ENCODE measurements at regions of chr22 and their contacts with region 1.

Region 1: DNA sequence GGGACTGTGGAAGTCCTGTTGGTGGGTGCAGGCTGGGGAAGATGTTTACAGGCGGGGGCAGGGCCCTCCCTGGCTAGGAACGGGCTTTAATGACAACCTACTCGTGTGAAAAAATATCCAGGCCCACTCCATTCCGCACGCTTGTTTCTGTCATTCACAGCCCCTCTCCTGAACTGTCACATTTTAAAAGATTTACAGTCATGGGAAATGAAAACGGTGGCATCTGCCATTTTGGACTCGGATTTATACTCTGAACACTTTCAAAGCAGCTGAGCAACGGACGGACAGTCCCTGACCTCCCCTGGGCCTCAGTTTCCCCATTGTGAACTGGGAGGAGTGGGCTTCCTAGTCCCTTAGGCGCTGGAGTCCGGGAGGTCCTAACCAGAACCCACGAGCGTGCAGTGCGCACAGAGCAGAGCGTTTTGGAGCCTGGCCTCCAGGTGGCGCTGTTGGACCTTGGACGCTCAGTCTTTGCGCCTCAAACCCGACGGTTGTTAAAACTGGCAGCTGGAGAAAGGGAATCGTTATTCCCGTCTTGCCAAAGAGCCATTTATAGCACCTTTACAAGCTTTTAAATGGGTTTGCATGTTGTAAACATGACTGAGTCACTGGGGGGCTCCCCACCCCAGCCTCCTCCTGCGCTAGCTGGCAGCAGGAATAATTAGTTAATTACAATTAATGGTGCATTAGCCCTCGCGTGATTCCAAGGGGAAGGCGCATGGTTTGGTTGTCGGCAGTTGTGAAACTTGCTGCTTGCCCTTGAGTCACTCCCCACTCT is 75.3 kb downstream of the FBLN1 start:
- DNase-seq: peak; percentile 73 to 91 (median 86)
- H3K4me3 ChIP-seq: no peak overlapping the region
- H3K27ac ChIP-seq: no peak overlapping the region
- H3K4me1 ChIP-seq: peaks cover 0 to 3% of the 10 kb centered on the region in 2 donors
- H3K27me3 ChIP-seq: peaks cover 4% of the 10 kb centered on the region
- CTCF ChIP-seq: peak; percentile 89 to 96 (median 92)
- POLR2A ChIP-seq: no peak

Region 2: GRCh38 chr22:45407793-45408192 is 170.1 kb before region 1 on chr22:
- intact Hi-C with region 1: no loop called
- DNase-seq: no peak
- H3K4me3 ChIP-seq: no peak overlapping the region
- H3K27ac ChIP-seq: no peak overlapping the region
- H3K4me1 ChIP-seq: no peaks in the 10 kb centered on the region
- H3K27me3 ChIP-seq: peaks cover 1% of the 10 kb centered on the region
- CTCF ChIP-seq: no peak
- POLR2A ChIP-seq: no peak

Region 3: GRCh38 chr22:45645526-45646414 is 67.8 kb after region 1 on chr22:
- intact Hi-C with region 1: loop called in 1 of 2 experiments (anchors 5 kb)
- DNase-seq: peak; percentile 46 to 78 (median 74)
- H3K4me3 ChIP-seq: no peak overlapping the region
- H3K27ac ChIP-seq: no peak overlapping the region
- H3K4me1 ChIP-seq: peaks cover 0 to 6% of the 10 kb centered on the region in 2 donors
- H3K27me3 ChIP-seq: peaks cover 15% of the 10 kb centered on the region
- CTCF ChIP-seq: peak; percentile 59 to 99 (median 82)
- POLR2A ChIP-seq: no peak

Region 4: DNA sequence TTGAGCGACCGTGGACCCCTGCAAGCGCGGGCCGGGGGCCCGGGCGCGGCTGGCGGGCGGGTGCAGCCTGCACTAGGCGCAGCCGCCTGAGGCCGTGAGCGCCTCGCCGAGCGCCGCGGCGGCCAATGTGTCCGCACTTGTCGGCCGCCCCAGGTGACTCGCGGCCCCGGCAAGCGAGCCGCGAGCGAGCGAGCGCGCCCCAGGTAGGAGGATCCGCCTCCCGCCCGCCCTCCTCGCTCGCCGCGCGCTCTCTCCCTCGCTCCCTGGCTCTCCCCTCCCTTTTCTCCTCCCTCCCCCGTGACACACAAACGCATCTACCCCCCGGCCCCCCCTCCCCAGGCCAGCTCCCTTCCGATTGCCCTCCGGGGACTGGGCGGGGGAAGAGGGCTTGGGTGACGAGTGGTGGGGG is 399.1 kb after region 1 on chr22 and contains the start of gene WNT7B:
- intact Hi-C with region 1: loop called in 1 of 2 experiments (anchors 2 kb)
- DNase-seq: no peak
- H3K4me3 ChIP-seq: peak within 1 kb of the TSS in 1 of 4 donors; percentile 15
- H3K27ac ChIP-seq: no peak within 1 kb of the TSS
- H3K4me1 ChIP-seq: peaks cover 1 to 12% of the 10 kb centered on the region in 2 donors
- H3K27me3 ChIP-seq: peaks cover 59% of the 10 kb centered on the region
- CTCF ChIP-seq: no peak
- POLR2A ChIP-seq: no peak
- total RNA-seq, gene WNT7B: 0.07 to 0.24 (median 0.13) TPM in 3 of 9 donors, not detected in the others

Region 5: DNA sequence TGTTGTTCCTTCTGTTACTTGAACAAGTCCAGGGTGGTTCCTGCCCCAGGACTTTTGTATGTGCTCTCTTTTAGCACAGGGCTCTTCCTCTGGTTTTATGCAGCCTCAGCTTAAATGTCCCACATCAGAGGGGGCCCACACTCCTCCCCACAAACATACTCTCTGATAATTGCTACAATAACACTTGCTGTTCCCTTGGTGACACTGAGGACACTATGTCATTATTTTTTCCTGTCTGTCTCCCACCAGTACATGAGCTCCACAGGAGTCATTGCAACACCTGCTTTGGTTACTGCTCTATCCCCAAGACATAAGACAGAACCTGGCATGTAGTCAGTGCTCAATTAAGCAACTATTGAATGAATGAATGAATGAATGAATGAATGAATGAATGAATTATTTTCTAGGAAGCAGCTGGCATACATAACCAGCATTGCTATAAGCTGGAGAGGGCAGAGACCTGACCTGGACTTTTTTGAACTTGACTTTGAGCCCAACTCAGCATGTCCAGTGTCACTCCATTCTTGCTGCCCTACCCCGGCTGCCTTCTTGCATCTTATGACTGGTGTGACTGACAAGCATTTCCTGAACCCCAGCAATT is 406.5 kb after region 1 on chr22:
- intact Hi-C with region 1: loop called in 1 of 2 experiments (anchors 5 kb)
- DNase-seq: no peak
- H3K4me3 ChIP-seq: no peak overlapping the region
- H3K27ac ChIP-seq: no peak overlapping the region
- H3K4me1 ChIP-seq: no peaks in the 10 kb centered on the region
- H3K27me3 ChIP-seq: no peaks in the 10 kb centered on the region
- CTCF ChIP-seq: no peak
- POLR2A ChIP-seq: no peak